Posterior vena cava (tissue), 2 donors: ENCODE measurements at regions of chr3 and their contacts with region 1.

Region 1: GRCh38 chr3:196440041-196440537 is 7.9 kb upstream of the UBXN7 start:
- DNase-seq: no peak

Region 2: DNA sequence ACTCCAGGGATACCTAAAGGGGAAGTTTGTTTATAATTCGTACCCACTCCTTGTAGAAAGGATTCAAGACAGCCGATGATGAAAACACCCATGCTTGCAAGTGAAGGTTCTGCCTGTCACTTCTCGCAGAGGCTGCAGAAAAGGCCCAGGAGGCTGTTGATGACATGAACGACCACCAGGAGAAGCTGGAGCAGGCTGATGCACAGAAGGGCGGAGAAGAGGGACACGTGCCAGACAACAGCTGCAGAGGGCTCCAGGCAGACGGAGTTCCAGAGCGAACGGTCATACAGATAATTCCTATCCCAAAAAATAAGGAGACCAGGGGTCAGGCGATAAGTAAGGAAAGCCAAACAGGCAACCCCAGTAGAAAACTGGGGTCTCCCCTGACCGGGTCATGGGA is 116.4 kb before region 1 on chr3:
- intact Hi-C with region 1: loop called in 1 of 2 experiments (anchors 1 kb)
- DNase-seq: no peak